Dorsolateral prefrontal cortex (tissue), 120 donors: ENCODE measurements at regions of chr20 and their contacts with region 1.

Region 1: GRCh38 chr20:12970372-12970821 is 38.4 kb upstream of the SPTLC3 start:
- DNase-seq: no peak
- H3K4me3 ChIP-seq: no peak overlapping the region
- H3K27ac ChIP-seq: no peak overlapping the region
- H3K27me3 ChIP-seq: peaks cover 0 to 3% (median 0%) of the 10 kb centered on the region in 45 donors
- CTCF ChIP-seq: peak in 55 of 56 donors; percentile 34 to 79 (median 54)

Region 2: GRCh38 chr20:13105864-13106457 is 135.6 kb after region 1 on chr20:
- intact Hi-C with region 1: loop called (anchors 5 kb)
- DNase-seq: no peak
- H3K4me3 ChIP-seq: no peak overlapping the region
- H3K27ac ChIP-seq: no peak overlapping the region
- H3K27me3 ChIP-seq: peaks cover 0 to 6% (median 0%) of the 10 kb centered on the region in 45 donors
- CTCF ChIP-seq: peak; percentile 66 to 94 (median 80)

Region 3: GRCh38 chr20:13755809-13756208 is 785.4 kb after region 1 on chr20:
- intact Hi-C with region 1: no loop called
- DNase-seq: no peak
- H3K4me3 ChIP-seq: no peak overlapping the region
- H3K27ac ChIP-seq: no peak overlapping the region
- H3K27me3 ChIP-seq: no peaks in the 10 kb centered on the region
- CTCF ChIP-seq: no peak